BJ (cell line): ENCODE measurements at regions of chr6 and their contacts with region 1.

Region 1: GRCh38 chr6:44456070-44456965 is 68.8 kb downstream of the CDC5L start:
- DNase-seq: no peak
- H3K4me3 ChIP-seq: no peak overlapping the region
- H3K27me3 ChIP-seq: no peaks in the 10 kb centered on the region
- CTCF ChIP-seq: peak; percentile 87

Region 2: GRCh38 chr6:44275749-44276648 is 180.3 kb before region 1 on chr6:
- CTCF ChIA-PET with region 1: no interaction called
- POLR2A ChIA-PET with region 1: no interaction called
- DNase-seq: no peak
- H3K4me3 ChIP-seq: no peak overlapping the region
- H3K27me3 ChIP-seq: peaks cover 25% of the 10 kb centered on the region
- CTCF ChIP-seq: no peak

Region 3: DNA sequence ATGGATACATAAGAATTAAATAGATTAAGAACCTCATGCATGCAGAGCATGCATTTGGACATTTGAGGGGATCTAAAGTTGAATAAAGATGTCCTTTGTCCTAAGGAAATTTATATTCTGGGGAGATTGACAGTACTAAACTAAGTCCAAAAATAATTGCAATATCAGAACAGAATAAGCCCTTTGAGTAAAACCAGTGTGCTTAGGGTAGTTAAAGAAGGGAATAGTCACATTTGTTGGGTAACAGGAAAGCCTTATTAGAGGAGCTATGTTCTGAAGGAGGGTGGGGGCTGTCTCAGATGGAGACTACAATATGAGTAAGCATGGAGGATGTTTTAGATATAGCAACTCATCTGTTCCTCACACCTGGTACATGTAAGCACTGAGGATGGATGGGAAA is 33.0 kb before region 1 on chr6:
- CTCF ChIA-PET with region 1: interaction called, 81 read pairs
- POLR2A ChIA-PET with region 1: no interaction called
- DNase-seq: no peak
- H3K4me3 ChIP-seq: no peak overlapping the region
- H3K27me3 ChIP-seq: no peaks in the 10 kb centered on the region
- CTCF ChIP-seq: no peak

Region 4: DNA sequence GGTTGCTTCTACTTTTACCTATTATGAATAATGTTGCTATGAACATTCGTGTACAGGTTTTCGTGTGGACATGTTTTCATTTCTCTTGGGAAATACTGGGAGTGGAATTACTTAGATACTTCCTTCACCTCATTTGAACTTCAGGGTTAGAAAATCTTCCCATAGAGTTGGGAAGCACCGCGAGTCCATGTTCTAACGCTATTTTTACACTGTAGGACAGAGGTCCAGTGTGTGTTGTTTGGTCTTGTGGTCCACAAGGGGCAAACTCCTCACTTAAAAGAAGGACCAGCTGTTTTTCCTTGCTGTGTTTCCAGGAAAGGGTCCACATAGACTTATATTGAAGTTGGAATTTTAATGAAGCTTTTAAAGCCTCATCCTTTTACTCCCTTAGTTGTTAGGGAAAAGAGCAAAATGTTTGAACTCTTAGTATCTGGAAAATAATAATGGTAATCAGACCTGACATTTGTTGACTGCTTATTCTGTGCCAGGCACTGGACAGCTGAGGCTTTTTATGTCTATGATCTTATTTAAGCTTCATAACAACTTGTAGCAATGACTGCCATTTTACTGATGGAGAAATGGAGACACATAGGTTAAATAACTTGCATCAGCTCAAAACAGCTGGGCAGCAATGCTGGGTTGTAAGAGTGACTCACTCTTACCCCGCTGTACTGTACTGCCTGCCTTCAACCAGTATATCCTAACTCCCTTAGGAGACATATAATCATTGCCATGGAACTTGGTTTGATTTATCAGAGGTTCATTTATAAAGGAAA is 16.9 kb before region 1 on chr6:
- CTCF ChIA-PET with region 1: interaction called, 23 read pairs
- POLR2A ChIA-PET with region 1: no interaction called
- DNase-seq: no peak
- H3K4me3 ChIP-seq: no peak overlapping the region
- H3K27me3 ChIP-seq: no peaks in the 10 kb centered on the region
- CTCF ChIP-seq: no peak